Kidney (tissue), 22 donors: ENCODE measurements at regions of chr1 and their contacts with region 1.

Region 1: DNA sequence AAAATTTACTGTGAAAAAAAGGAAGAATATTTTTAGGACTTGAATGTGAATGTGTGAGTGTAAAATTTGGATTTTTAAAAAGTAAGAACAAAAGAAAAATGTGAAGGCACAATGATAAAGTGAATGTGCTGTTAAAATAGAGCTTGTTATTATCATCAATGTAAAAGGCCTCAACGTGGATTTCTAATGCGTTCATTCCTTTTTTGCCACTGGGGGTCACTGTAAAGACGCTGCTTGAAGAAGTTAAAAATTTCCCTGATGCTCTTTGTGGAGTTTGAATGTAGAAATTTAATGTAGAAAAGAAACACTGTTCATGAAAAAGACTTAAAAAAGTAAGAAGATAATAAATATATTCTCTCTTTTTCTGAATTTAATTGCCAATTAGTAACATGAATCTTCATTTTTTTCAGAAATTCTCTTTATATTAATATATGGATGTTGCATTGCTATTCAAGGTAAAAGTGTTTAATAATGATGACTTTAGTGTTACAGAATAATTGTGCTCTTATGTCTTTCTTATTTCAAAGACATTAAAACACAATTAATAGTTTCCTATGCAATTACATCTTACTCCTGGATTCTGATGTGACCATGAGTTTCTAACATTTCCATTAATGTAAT is 161.5 kb downstream of the DNM3 start:
- DNase-seq: peak in 3 of 5 donors; percentile 34 to 83 (median 68)
- H3K4me3 ChIP-seq: no peak overlapping the region
- H3K27ac ChIP-seq: no peak overlapping the region
- H3K4me1 ChIP-seq: peaks cover 0 to 4% (median 2%) of the 10 kb centered on the region in 3 donors
- H3K27me3 ChIP-seq: no peaks in the 10 kb centered on the region
- CTCF ChIP-seq: peak; percentile 61

Region 2: DNA sequence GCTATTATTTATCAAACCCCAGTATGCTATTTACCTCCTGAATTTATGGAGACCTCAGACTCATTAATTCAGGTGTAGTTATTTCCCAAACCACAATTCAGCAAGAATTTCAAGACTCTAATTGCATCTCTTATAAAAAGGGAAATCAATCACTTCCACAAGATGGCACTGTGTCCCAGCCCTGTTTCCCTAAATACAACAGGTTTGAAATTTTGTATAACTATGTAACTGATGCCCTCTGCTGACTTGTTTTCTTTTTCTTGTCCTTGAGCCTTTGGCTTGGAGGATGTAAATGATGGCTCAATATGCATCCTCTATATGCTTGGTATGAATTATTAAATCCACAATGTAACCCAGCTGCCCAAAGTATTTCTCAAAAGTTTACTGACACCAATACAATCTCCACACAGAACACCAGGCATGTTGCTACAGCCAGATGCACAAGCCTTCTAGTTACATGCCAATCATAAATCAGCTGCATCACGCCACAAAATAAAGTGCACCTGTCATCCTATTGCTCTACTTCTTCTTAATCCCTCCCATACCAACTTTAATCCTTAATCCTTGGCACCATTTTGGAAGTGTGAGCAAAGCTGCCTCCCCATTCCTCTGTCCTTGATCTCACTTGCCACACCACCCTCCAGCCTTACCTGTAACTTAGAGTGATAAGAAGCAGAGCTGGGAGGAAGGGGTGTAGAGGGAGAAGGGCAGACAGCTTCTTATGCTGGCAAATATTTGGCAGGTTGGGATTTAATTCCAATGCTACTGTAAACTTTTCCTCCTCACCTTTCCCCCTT is 426.7 kb after region 1 on chr1:
- intact Hi-C with region 1: loop called (anchors 10 kb)
- DNase-seq: peak in 2 of 5 donors; percentile 79 to 88
- H3K4me3 ChIP-seq: no peak overlapping the region
- H3K27ac ChIP-seq: no peak overlapping the region
- H3K4me1 ChIP-seq: no peaks in the 10 kb centered on the region
- H3K27me3 ChIP-seq: no peaks in the 10 kb centered on the region
- CTCF ChIP-seq: peak; percentile 63